Prostate gland (tissue), 2 donors: ENCODE measurements at regions of chr6 and their contacts with region 1.

Region 1: GRCh38 chr6:166999145-166999883 is at the start of gene CEP43:
- DNase-seq: peak; percentile 88
- H3K4me3 ChIP-seq: peak within 1 kb of the TSS; percentile 86 to 88
- H3K27ac ChIP-seq: peak within 1 kb of the TSS; percentile 73 to 74
- H3K4me1 ChIP-seq: no peaks in the 10 kb centered on the region
- H3K27me3 ChIP-seq: no peaks in the 10 kb centered on the region
- CTCF ChIP-seq: peak in 2 of 4 experiments; percentile 18 to 57
- POLR2A ChIP-seq: peak; percentile 58
- total RNA-seq, gene CEP43: 13.3 to 25.7 TPM

Region 2: DNA sequence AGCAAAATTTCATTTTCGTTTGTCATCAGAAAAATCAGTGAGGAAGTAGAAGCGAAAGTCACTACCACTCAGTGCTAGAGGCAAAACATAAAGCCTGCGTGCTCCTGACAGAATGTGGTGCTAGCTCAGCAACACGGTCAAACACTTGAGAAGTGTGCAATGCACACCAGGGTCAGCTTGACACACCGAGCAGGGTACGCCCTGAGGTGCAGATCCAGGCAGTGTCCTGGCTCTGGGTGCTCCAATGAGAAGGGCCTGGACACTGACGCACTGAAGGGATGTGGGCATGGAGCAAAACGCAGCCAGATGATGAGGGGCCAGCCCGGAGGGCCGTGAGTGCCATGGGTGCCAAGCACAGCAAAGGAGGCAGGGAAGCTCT is 48.9 kb before region 1 on chr6:
- intact Hi-C with region 1: loop called (anchors 5 kb)
- DNase-seq: no peak
- H3K4me3 ChIP-seq: no peak overlapping the region
- H3K27ac ChIP-seq: no peak overlapping the region
- H3K4me1 ChIP-seq: peaks cover 4% of the 10 kb centered on the region
- H3K27me3 ChIP-seq: no peaks in the 10 kb centered on the region
- CTCF ChIP-seq: no peak
- POLR2A ChIP-seq: no peak

Region 3: GRCh38 chr6:167141667-167142432 is 142.5 kb after region 1 on chr6:
- intact Hi-C with region 1: loop called (anchors 5 kb)
- DNase-seq: peak; percentile 15
- H3K4me3 ChIP-seq: no peak overlapping the region
- H3K27ac ChIP-seq: no peak overlapping the region
- H3K4me1 ChIP-seq: no peaks in the 10 kb centered on the region
- H3K27me3 ChIP-seq: no peaks in the 10 kb centered on the region
- CTCF ChIP-seq: peak in 3 of 4 experiments; percentile 42 to 72 (median 68)
- POLR2A ChIP-seq: no peak

Region 4: DNA sequence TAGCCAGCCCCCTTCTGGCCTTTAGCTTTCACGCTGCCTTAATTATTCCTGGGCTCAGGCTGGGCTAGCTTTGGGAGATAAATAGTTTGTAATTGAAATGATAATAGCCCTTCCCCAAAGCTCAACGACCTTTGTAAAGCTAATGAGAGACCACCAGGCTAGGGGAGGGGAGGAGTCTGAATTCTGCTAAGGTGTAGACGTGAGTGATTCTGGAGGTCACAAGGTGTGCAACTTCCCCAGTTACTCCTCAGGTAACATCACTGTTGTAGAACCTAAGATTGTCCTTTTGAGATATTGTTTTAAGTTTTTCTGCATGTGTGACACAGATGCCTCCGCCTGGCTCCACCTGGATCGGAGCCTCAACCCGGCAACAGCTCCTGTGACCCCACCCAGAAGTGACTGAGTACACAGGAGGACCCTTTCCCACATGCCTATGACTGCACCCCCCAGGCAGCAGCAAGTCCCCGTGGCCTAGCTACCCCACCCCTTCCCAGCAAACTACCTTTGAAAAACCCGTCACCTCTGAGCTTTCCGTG is 164.2 kb after region 1 on chr6:
- intact Hi-C with region 1: no loop called
- DNase-seq: no peak
- H3K4me3 ChIP-seq: no peak overlapping the region
- H3K27ac ChIP-seq: no peak overlapping the region
- H3K4me1 ChIP-seq: no peaks in the 10 kb centered on the region
- H3K27me3 ChIP-seq: peaks cover 7% of the 10 kb centered on the region
- CTCF ChIP-seq: no peak
- POLR2A ChIP-seq: no peak